Psoas muscle (tissue), 8 donors: ENCODE measurements at regions of chr15 and their contacts with region 1.

Region 1: DNA sequence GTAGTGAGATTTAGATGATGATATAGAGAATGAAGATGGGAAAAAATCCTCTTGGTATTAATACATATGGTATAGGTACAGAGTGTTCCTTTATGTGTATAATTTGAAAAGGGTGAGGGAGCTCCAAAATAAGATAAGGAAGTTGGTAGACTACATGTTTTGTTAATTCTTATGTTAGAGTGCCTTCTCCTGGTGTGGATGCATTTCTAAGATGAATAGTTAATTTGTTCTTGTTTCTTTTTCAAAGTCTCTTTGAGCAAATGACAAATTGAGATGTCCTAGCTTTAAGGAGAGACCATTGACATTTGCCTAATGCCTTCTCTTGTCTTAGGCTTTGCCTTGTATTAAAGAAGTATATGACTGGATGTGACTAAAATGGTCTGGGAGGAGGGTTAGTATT is 34.1 kb downstream of the AKAP13 start:
- DNase-seq: no peak
- ATAC-seq: peak in 2 of 4 donors; percentile 39 to 55
- H3K4me3 ChIP-seq: no peak overlapping the region
- H3K27ac ChIP-seq: no peak overlapping the region
- H3K4me1 ChIP-seq: peaks cover 25% of the 10 kb centered on the region
- H3K27me3 ChIP-seq: no peaks in the 10 kb centered on the region
- CTCF ChIP-seq: peak; percentile 34

Region 2: GRCh38 chr15:85330901-85331588 is 83.5 kb before region 1 on chr15:
- intact Hi-C with region 1: loop called in 1 of 2 experiments (anchors 2 kb)
- DNase-seq: peak; percentile 86 to 93
- ATAC-seq: peak; percentile 93 to 98 (median 97)
- H3K4me3 ChIP-seq: no peak overlapping the region
- H3K27ac ChIP-seq: peak overlapping the region; percentile 58
- H3K4me1 ChIP-seq: peaks cover 12% of the 10 kb centered on the region
- H3K27me3 ChIP-seq: no peaks in the 10 kb centered on the region
- CTCF ChIP-seq: peak; percentile 83

Region 3: GRCh38 chr15:85380217-85380811 is 34.2 kb before region 1 on chr15 and contains the start of gene AKAP13:
- intact Hi-C with region 1: no loop called
- DNase-seq: peak; percentile 97 to 98
- ATAC-seq: peak; percentile 97 to 99 (median 98)
- H3K4me3 ChIP-seq: peak within 1 kb of the TSS; percentile 78
- H3K27ac ChIP-seq: peak within 1 kb of the TSS; percentile 91
- H3K4me1 ChIP-seq: peaks cover 13% of the 10 kb centered on the region
- H3K27me3 ChIP-seq: no peaks in the 10 kb centered on the region
- CTCF ChIP-seq: no peak
- total RNA-seq, gene AKAP13: 93.7 to 126 (median 122) TPM

Region 4: DNA sequence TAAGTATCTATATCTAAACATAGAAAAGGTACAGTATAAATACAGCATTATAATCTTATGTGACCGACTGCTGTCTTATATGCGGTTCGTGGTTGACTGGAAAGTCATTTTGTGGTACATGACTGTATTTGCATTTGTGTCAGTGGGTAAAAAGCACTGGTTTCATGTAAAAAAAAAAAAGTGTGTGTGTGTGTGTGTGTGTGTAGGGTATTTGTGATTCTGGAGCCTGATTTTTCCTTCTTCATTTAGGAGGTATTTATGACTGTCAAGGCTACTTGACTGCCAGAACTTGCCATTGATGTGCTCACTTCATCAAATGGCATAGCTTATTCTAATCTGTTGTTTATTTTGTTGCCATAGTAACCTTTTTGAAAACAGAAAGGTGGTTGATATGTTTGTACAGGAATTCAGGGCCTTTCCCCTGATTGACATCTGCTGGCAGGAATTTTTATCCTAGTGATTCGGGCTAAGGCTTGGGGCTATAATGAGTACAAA is 29.1 kb after region 1 on chr15:
- intact Hi-C with region 1: loop called in 1 of 2 experiments (anchors 2 kb)
- DNase-seq: no peak
- ATAC-seq: peak in 1 of 4 donors; percentile 46
- H3K4me3 ChIP-seq: no peak overlapping the region
- H3K27ac ChIP-seq: no peak overlapping the region
- H3K4me1 ChIP-seq: peaks cover 20% of the 10 kb centered on the region
- H3K27me3 ChIP-seq: no peaks in the 10 kb centered on the region
- CTCF ChIP-seq: peak; percentile 5